PC-9 (cell line): ENCODE measurements at regions of chr4 and their contacts with region 1.

Region 1: GRCh38 chr4:164997324-164997723 is 19.9 kb upstream of the TRIM61 start:
- DNase-seq: no peak
- H3K4me3 ChIP-seq: no peak overlapping the region
- H3K27ac ChIP-seq: no peak overlapping the region
- H3K4me1 ChIP-seq: no peaks in the 10 kb centered on the region
- H3K27me3 ChIP-seq: peaks cover 7% of the 10 kb centered on the region; the same call in 1 of the 2 replicates
- CTCF ChIP-seq: peak; percentile 41; the same call in 1 of the 2 replicates

Region 2: DNA sequence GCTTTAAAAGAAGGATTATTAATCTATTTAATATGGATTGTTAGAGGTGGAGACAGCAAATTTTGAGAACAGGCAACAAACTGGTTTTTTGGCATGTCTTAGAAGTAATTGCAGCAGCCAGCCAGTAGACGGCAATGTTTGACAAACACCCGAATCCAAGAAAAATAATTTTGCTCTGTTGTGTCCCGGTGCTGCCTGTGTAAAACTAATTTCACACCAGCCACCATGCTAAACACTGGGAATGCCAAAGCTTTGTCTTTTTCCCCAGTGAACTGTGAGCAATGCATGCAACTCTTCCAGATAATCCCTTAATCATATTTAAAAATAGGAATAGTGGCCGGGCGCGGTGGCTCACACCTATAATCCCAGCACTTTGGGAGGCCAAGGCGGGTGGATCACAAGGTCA is 217.5 kb before region 1 on chr4:
- CTCF ChIA-PET with region 1: no interaction called
- POLR2A ChIA-PET with region 1: no interaction called
- intact Hi-C with region 1: loop called (anchors 5 kb)
- DNase-seq: peak in 1 of 2 experiments; percentile 30
- H3K4me3 ChIP-seq: no peak overlapping the region
- H3K27ac ChIP-seq: no peak overlapping the region
- H3K4me1 ChIP-seq: no peaks in the 10 kb centered on the region
- H3K27me3 ChIP-seq: no peaks in the 10 kb centered on the region
- CTCF ChIP-seq: peak; percentile 72

Region 3: GRCh38 chr4:164856396-164856795 is 140.9 kb before region 1 on chr4:
- CTCF ChIA-PET with region 1: no interaction called
- POLR2A ChIA-PET with region 1: no interaction called
- intact Hi-C with region 1: no loop called
- DNase-seq: no peak
- H3K4me3 ChIP-seq: no peak overlapping the region
- H3K27ac ChIP-seq: no peak overlapping the region
- H3K4me1 ChIP-seq: no peaks in the 10 kb centered on the region
- H3K27me3 ChIP-seq: no peaks in the 10 kb centered on the region
- CTCF ChIP-seq: no peak

Region 4: DNA sequence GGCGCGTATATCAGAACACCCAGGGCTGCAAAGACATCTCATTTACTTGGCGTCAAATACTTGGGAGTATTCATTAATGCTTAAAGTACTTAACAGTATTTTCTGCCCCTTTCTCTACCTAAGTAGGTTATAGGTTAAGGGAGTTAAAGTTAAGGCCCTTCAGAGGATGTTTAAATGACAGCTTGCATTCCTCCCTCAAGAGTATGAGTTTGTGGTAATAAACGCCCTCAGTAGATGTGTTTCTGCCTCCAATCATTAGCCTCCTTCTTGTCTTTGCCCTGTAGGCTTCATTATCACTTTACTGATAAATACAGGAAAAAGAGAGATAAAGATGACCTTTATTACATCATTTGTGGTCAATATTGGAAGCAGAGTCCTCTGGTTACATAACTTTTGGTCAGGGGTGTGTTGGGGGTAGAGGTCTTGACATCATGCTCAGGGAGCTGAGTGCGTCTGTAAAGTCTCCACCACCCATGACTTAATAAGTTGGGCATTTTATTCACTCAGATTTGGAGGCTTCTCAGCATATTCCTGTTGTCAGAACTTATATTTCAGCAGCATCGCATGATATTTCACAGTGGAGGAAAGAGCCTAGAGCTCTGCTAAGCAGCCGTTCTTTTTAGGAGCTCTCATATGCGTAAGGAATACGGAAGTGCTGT is 527.3 kb after region 1 on chr4:
- CTCF ChIA-PET with region 1: no interaction called
- POLR2A ChIA-PET with region 1: no interaction called
- intact Hi-C with region 1: no loop called
- DNase-seq: no peak
- H3K4me3 ChIP-seq: no peak overlapping the region
- H3K27ac ChIP-seq: no peak overlapping the region
- H3K4me1 ChIP-seq: no peaks in the 10 kb centered on the region
- H3K27me3 ChIP-seq: no peaks in the 10 kb centered on the region
- CTCF ChIP-seq: no peak